MCF 10A (cell line): ENCODE measurements at regions of chr17 and their contacts with region 1.

Region 1: GRCh38 chr17:57243171-57243948 is 13.0 kb upstream of the MSI2 start:
- DNase-seq: peak; percentile 73
- H3K4me3 Mint-ChIP-seq: no peak overlapping the region
- H3K27ac Mint-ChIP-seq: no peak overlapping the region
- H3K4me1 Mint-ChIP-seq: peaks cover 4% of the 10 kb centered on the region
- H3K27me3 Mint-ChIP-seq: no peaks in the 10 kb centered on the region
- CTCF ChIP-seq: peak; percentile 98

Region 2: DNA sequence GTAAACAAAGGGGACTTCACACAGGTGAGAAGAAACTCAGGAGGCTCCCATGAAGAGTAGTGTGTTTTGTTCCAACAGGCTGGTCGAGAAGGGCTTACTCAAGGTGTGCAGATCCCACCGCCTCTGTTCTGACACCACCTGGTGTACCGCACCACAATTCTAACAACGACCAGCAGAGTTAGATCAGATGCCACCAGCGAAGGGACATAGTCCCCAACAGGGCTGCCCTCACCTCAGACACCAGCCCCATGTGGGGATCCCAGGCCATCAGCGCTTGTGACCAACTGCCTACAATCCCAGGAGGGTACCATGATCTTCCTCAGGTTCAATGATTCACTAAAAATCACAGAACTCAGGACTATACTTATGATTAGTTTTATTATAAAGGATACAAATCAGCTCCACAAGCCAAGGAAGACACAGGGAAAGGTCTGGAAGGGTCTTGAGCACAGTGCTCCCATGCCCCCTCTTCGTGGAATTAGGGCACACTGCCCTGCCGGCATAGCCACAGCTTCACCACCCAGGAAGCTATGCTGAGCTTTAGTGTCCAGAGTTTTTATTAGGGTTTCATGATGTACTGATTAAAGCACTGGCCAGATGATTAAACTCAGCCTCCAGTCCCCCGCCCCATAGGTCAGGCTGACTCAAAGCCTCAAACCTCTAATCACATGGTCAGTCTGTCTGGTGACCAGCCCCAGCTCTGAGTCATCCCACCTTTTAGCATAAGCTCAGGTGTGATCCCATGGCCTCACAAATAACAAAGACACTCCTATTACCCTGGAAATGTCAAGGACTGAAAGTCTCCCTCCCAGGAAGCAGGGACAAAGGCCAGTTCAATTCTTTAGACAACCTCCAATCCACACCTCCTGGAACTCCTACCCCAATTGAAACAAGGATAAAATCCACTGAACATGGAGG is 355.6 kb before region 1 on chr17:
- CTCF ChIA-PET with region 1: no interaction called
- POLR2A ChIA-PET with region 1: no interaction called
- intact Hi-C with region 1: no loop called
- DNase-seq: no peak
- H3K4me3 Mint-ChIP-seq: no peak overlapping the region
- H3K27ac Mint-ChIP-seq: no peak overlapping the region
- H3K4me1 Mint-ChIP-seq: no peaks in the 10 kb centered on the region
- H3K27me3 Mint-ChIP-seq: no peaks in the 10 kb centered on the region
- CTCF ChIP-seq: no peak

Region 3: GRCh38 chr17:57142925-57143324 is 100.4 kb before region 1 on chr17:
- CTCF ChIA-PET with region 1: interaction called, 11 read pairs
- POLR2A ChIA-PET with region 1: no interaction called
- intact Hi-C with region 1: no loop called
- DNase-seq: peak; percentile 21
- H3K4me3 Mint-ChIP-seq: no peak overlapping the region
- H3K27ac Mint-ChIP-seq: no peak overlapping the region
- H3K4me1 Mint-ChIP-seq: peaks cover 11% of the 10 kb centered on the region
- H3K27me3 Mint-ChIP-seq: no peaks in the 10 kb centered on the region
- CTCF ChIP-seq: no peak

Region 4: DNA sequence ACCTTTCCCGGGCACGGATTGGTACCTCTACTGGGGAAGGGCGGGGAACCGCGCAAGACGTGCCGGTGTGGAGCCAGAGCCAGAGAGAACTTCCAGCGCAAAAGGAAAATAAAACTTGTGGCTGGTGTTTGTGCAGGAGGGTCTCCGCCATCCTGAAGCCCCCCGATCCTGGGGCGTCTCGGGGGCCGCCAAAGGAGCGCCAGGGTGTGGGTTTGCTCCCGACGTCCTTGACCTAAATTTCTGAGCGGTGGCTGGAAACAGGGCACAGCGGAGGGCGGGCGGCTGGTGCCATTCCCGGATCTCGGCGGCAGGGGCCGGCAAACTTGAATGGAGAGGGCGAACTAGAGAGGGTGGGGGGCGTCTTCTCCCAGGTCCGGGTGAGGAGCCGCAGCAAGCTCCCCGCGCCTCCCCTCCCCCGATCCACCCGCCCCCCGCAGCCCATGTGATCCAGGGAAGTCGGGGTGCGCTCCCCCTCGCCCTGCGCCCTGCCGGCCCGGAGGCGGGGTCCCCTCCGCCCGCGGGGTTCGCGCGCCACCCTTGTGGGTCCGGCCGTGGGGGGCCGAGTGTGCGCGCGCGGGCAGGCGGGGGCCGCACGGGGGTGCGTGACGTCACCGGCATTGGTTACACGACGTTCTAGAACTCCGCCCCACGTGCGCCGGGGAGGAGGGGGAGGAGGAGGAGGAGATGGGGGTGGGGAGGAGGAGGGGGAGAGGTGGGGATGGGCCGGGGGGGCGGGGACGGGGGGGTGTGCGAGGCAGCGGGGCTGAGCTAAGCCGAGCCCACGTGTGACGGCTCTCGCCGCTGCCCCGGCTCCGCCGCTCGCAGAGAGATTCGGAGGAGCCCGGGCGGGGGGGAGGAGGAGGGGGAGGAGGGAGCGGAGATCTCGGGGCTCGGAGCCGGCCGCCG is 12.7 kb after region 1 on chr17 and contains the start of gene MSI2:
- CTCF ChIA-PET with region 1: interaction called, 35 read pairs
- POLR2A ChIA-PET with region 1: interaction called, 4 read pairs
- intact Hi-C with region 1: no loop called
- DNase-seq: peak; percentile 83
- H3K4me3 Mint-ChIP-seq: peak within 1 kb of the TSS; percentile 96
- H3K27ac Mint-ChIP-seq: peak within 1 kb of the TSS; percentile 89
- H3K4me1 Mint-ChIP-seq: peaks cover 18% of the 10 kb centered on the region
- H3K27me3 Mint-ChIP-seq: no peaks in the 10 kb centered on the region
- CTCF ChIP-seq: no peak
- total RNA-seq, gene MSI2: 52.4 and 60.6 TPM in 2 replicates

Region 5: GRCh38 chr17:57404073-57404472 is 160.7 kb after region 1 on chr17:
- CTCF ChIA-PET with region 1: interaction called, 4 read pairs
- POLR2A ChIA-PET with region 1: no interaction called
- intact Hi-C with region 1: loop called (anchors 1 kb)
- DNase-seq: peak; percentile 6
- H3K4me3 Mint-ChIP-seq: no peak overlapping the region
- H3K27ac Mint-ChIP-seq: no peak overlapping the region
- H3K4me1 Mint-ChIP-seq: peaks cover 7% of the 10 kb centered on the region
- H3K27me3 Mint-ChIP-seq: no peaks in the 10 kb centered on the region
- CTCF ChIP-seq: no peak

Region 6: DNA sequence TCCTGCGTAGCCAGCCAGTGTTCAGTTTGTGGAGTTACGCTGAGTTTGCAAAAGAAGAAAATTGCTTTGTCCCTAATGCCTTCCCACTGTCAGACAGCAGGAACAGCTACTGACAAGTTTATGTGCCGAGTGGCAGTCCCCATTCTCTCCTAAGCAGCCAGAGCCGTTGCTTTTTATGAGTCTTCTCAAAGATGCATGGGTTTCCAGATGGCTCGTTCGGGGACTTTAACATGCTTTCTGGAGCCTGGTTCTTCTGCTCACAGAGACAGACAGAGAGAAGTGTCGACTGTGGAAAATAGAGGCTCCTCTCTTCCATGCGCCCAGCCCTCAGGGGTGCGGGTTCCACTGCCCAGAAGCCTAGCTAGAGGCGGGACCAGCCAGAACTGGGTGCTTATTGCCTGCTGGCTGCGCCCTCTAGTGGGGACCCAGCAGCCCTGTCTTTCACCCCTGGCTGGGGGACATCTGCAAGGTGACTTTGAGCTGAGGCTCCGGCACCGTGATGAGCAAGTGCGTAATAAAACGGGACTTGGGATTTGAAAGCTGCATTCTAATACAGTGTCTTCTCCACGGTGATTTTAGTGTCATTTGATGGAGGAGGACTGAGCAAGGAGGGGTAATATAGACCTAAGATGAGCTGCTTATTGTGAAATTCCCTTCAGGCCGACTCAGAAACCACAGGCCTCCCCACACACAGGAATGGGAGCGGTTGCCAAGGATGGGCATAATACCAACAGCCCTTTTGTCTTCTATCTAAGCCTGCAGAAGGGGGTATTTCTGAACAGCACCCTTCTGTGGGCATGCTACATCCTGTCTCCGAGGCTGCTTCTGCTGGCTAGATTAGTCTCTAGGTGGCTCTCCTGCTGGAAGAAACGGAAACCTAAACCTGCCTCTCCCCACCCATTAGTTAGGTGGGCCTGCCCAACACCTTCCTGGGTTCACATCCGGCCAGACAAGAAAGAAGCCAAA is 428.6 kb after region 1 on chr17:
- CTCF ChIA-PET with region 1: interaction called, 24 read pairs
- POLR2A ChIA-PET with region 1: interaction called, 5 read pairs
- intact Hi-C with region 1: loop called (anchors 1 kb)
- DNase-seq: peak; percentile 79
- H3K4me3 Mint-ChIP-seq: no peak overlapping the region
- H3K27ac Mint-ChIP-seq: no peak overlapping the region
- H3K4me1 Mint-ChIP-seq: peaks cover 19% of the 10 kb centered on the region
- H3K27me3 Mint-ChIP-seq: no peaks in the 10 kb centered on the region
- CTCF ChIP-seq: peak; percentile 90

Region 7: GRCh38 chr17:57833179-57833939 is 590.0 kb after region 1 on chr17:
- CTCF ChIA-PET with region 1: interaction called, 22 read pairs
- POLR2A ChIA-PET with region 1: no interaction called
- intact Hi-C with region 1: loop called (anchors 10 kb)
- DNase-seq: peak; percentile 70
- H3K4me3 Mint-ChIP-seq: no peak overlapping the region
- H3K27ac Mint-ChIP-seq: no peak overlapping the region
- H3K4me1 Mint-ChIP-seq: peaks cover 15% of the 10 kb centered on the region
- H3K27me3 Mint-ChIP-seq: no peaks in the 10 kb centered on the region
- CTCF ChIP-seq: peak; percentile 78